ENCODE measurements at regions of chr22 and their contacts with region 1.

Region 1: DNA sequence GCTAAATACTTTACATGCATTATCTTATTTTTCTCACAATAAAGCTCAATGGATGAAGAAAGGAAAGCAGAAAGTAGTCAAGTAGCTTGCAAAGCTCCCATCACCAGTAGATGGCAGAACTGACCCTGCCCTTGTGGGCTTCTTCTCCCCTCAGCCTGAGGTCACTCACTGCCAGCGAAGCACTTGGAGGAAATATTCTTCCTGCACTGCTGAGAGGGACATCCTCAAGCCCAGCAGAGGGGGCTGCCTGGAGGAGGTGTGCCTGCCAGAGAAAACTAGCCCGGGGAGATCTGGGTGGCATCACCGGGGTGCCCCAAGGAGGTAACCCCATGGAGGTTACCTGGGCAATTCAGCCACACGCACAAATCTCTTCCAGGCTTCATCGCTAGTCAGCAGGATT is 6.6 kb downstream of the APOL4 start:
- DNase-seq: peak in 1 of 2 donors; percentile 80
- H3K4me3 ChIP-seq: no peak overlapping the region
- H3K27ac ChIP-seq: no peak overlapping the region
- H3K4me1 ChIP-seq: no peaks in the 10 kb centered on the region
- H3K27me3 ChIP-seq: no peaks in the 10 kb centered on the region
- CTCF ChIP-seq: peak; percentile 71 to 79 (median 76)

Region 2: GRCh38 chr22:36221799-36222751 is 27.1 kb after region 1 on chr22:
- intact Hi-C with region 1: loop called (anchors 2 kb)
- DNase-seq: no peak
- H3K4me3 ChIP-seq: no peak overlapping the region
- H3K27ac ChIP-seq: no peak overlapping the region
- H3K4me1 ChIP-seq: peaks cover 0 to 3% of the 10 kb centered on the region in 2 donors
- H3K27me3 ChIP-seq: no peaks in the 10 kb centered on the region
- CTCF ChIP-seq: peak; percentile 30 to 56 (median 47)

Region 3: GRCh38 chr22:36239401-36240171 is 44.6 kb after region 1 on chr22 and contains the start of gene APOL2:
- intact Hi-C with region 1: loop called (anchors 5 kb)
- DNase-seq: peak; percentile 80 to 96
- H3K4me3 ChIP-seq: peak within 1 kb of the TSS; percentile 70 to 81
- H3K27ac ChIP-seq: peak within 1 kb of the TSS; percentile 86 to 90
- H3K4me1 ChIP-seq: peaks cover 10 to 36% of the 10 kb centered on the region in 2 donors
- H3K27me3 ChIP-seq: no peaks in the 10 kb centered on the region
- CTCF ChIP-seq: peak; percentile 50 to 79 (median 71)
- total RNA-seq, gene APOL2: 34.3 TPM

Region 4: GRCh38 chr22:36277482-36278291 is 82.7 kb after region 1 on chr22:
- intact Hi-C with region 1: loop called (anchors 2 kb)
- DNase-seq: no peak
- H3K4me3 ChIP-seq: no peak overlapping the region
- H3K27ac ChIP-seq: no peak overlapping the region
- H3K4me1 ChIP-seq: peaks cover 0 to 5% of the 10 kb centered on the region in 2 donors
- H3K27me3 ChIP-seq: no peaks in the 10 kb centered on the region
- CTCF ChIP-seq: peak; percentile 63 to 80 (median 79)

Region 5: GRCh38 chr22:36486619-36487384 is 291.8 kb after region 1 on chr22:
- intact Hi-C with region 1: loop called (anchors 5 kb)
- DNase-seq: no peak
- H3K4me3 ChIP-seq: no peak overlapping the region
- H3K27ac ChIP-seq: no peak overlapping the region
- H3K4me1 ChIP-seq: peaks cover 0 to 3% of the 10 kb centered on the region in 2 donors
- H3K27me3 ChIP-seq: no peaks in the 10 kb centered on the region
- CTCF ChIP-seq: peak; percentile 50 to 71 (median 66)